GM12878 (cell line): ENCODE measurements at regions of chr2 and their contacts with region 1.

Region 1: DNA sequence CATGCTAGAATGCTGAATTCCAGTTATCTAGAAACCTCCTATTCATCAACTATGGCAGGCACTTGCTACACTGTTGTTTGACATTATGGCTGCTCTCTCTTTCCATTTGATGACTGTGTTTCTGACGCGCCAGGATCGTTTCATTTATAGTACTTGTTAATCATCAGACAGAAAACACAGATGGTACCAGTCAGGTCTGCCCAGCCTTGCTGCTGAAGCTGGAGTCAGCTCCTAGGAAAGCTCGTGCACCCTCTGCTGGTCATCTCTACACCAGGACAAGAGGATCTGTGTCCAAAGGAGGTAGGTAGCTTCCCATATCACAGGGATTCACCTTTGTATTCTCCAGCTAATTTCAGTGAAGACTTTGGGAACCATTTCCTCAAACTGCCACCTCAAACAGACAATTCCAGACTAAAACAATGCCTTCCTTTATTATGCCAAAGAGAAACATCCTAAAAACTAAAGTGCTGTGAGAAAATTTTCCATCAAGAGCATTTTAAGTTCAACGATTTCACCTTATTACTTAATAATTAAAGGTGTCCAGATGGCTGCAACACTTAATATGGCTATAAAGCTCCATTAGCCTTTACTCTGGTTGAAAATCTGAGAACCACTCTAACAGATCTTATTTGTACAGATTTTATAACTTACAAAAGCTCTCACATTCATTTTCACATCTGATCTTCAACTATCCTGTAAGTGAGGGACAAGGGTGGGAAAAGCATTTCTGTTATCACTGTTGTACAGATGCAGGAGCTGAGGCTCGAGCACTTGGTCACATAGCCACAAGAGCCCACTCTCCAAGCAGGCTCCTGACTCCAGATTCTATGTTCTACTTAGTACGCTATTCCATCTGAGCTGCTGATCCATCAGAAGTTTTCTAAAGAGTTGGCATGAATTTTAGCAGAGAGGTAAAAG is 17.5 kb downstream of the METTL8 start:
- DNase-seq: peak; percentile 95
- ATAC-seq: peak; percentile 91
- H3K4me3 ChIP-seq: no peak overlapping the region; the same call in 1 of the 2 replicates
- H3K27ac ChIP-seq: peak overlapping the region; percentile 83
- H3K4me1 ChIP-seq: peaks cover 32% of the 10 kb centered on the region
- H3K27me3 ChIP-seq: no peaks in the 10 kb centered on the region
- CTCF ChIP-seq: peak; percentile 83 to 95 (median 88); a peak in 5 of 6 replicates
- EP300 ChIP-seq: peak in 1 of 2 experiments; percentile 50; a peak in 2 of 4 replicates
- POLR2A ChIP-seq: peak; percentile 64
- RAD21 ChIP-seq: peak; percentile 97

Region 2: GRCh38 chr2:171086352-171087290 is 329.6 kb before region 1 on chr2:
- CTCF ChIA-PET with region 1: interaction called, 28 read pairs
- POLR2A ChIA-PET with region 1: no interaction called
- RAD21 ChIA-PET with region 1: interaction called, 7 read pairs
- SMC1A ChIA-PET with region 1: interaction called, 12 read pairs
- in situ Hi-C with region 1: no loop called
- intact Hi-C with region 1: no loop called
- DNase-seq: peak; percentile 9
- ATAC-seq: peak; percentile 91
- H3K4me3 ChIP-seq: no peak overlapping the region
- H3K27ac ChIP-seq: peak overlapping the region; percentile 17; the same call in 1 of the 2 replicates
- H3K4me1 ChIP-seq: no peaks in the 10 kb centered on the region; the same call in 1 of the 2 replicates
- H3K27me3 ChIP-seq: no peaks in the 10 kb centered on the region
- CTCF ChIP-seq: peak; percentile 45 to 64 (median 63)
- EP300 ChIP-seq: no peak
- POLR2A ChIP-seq: no peak
- RAD21 ChIP-seq: 0 out of 2 replicates have a peak, but pooled peaks have one; percentile 8

Region 3: GRCh38 chr2:171244970-171245782 is 171.1 kb before region 1 on chr2:
- CTCF ChIA-PET with region 1: interaction called, 6 read pairs
- POLR2A ChIA-PET with region 1: no interaction called
- RAD21 ChIA-PET with region 1: interaction called, 11 read pairs
- SMC1A ChIA-PET with region 1: interaction called, 3 read pairs
- in situ Hi-C with region 1: no loop called
- intact Hi-C with region 1: loop called (anchors 5 kb)
- DNase-seq: no peak
- ATAC-seq: no peak
- H3K4me3 ChIP-seq: no peak overlapping the region
- H3K27ac ChIP-seq: no peak overlapping the region
- H3K4me1 ChIP-seq: peaks cover 24% of the 10 kb centered on the region
- H3K27me3 ChIP-seq: no peaks in the 10 kb centered on the region
- CTCF ChIP-seq: no peak
- EP300 ChIP-seq: no peak
- POLR2A ChIP-seq: no peak
- RAD21 ChIP-seq: no peak; the same call in 1 of the 2 replicates

Region 4: DNA sequence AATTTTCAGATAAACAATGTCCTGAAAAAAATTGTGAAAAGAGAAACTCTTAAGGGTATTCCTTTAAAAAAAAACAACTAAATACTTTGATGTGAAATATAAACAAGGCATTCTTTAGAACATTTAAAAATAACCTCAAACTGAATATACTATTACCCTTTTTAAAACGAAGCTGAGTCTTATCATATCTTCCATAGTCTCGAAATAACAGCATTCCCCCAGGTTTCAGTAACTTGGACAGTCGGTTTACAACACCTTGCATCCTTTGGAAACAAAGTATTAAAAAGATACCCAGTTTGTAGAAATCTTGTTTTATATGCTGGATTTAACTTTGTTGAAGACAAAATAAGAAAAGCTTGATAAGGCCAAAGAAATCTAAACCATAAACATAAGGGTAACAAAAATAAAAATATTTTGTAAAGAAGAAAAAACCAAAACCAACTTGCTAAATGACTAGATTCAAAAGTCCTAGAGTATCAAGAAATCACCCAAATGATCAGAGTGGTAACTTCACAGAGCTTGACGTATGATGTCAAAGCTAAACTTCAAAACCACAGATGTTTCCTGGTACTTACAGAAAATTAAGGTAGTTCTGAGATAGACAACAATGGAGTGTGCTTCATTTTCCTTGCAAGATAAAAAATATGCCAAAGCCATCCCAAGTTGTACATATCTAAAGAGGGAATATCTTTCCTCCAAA is 90.2 kb before region 1 on chr2:
- CTCF ChIA-PET with region 1: interaction called, 110 read pairs
- POLR2A ChIA-PET with region 1: interaction called, 168 read pairs
- RAD21 ChIA-PET with region 1: interaction called, 208 read pairs
- SMC1A ChIA-PET with region 1: interaction called, 273 read pairs
- in situ Hi-C with region 1: loop called (anchors 5 kb)
- intact Hi-C with region 1: no loop called
- DNase-seq: no peak
- ATAC-seq: peak; percentile 71
- H3K4me3 ChIP-seq: peak overlapping the region; percentile 41; the same call in 1 of the 2 replicates
- H3K27ac ChIP-seq: peak overlapping the region; percentile 100
- H3K4me1 ChIP-seq: peaks cover 57% of the 10 kb centered on the region
- H3K27me3 ChIP-seq: no peaks in the 10 kb centered on the region
- CTCF ChIP-seq: no peak
- EP300 ChIP-seq: peak; percentile 61 to 62; a peak in 2 of 4 replicates
- POLR2A ChIP-seq: no peak
- RAD21 ChIP-seq: no peak

Region 5: DNA sequence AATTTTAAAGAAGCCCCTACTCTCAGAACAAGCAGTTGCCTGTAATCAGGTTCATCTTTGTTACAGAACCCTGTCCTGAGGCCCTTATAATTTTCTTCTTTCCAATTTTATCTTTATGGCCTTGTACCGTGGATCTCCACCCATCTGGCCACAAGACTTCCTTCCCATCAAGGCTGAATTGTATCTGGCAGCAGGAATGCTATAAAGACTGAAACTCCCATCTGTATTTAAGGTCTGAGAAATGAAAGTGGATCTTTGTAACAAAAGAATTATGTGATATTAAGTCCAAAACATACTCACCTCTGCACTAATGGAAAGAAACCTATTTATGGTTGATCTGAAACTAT is 74.2 kb before region 1 on chr2:
- CTCF ChIA-PET with region 1: interaction called, 34 read pairs
- POLR2A ChIA-PET with region 1: interaction called, 8 read pairs
- RAD21 ChIA-PET with region 1: interaction called, 54 read pairs
- SMC1A ChIA-PET with region 1: interaction called, 59 read pairs
- in situ Hi-C with region 1: no loop called
- intact Hi-C with region 1: loop called (anchors 5 kb)
- DNase-seq: no peak
- ATAC-seq: peak; percentile 10; the same call in 2 of the 3 replicates
- H3K4me3 ChIP-seq: no peak overlapping the region
- H3K27ac ChIP-seq: peak overlapping the region; percentile 69
- H3K4me1 ChIP-seq: peaks cover 23% of the 10 kb centered on the region
- H3K27me3 ChIP-seq: no peaks in the 10 kb centered on the region
- CTCF ChIP-seq: no peak
- EP300 ChIP-seq: no peak
- POLR2A ChIP-seq: no peak
- RAD21 ChIP-seq: no peak

Region 6: GRCh38 chr2:171390941-171391516 is 25.2 kb before region 1 on chr2:
- CTCF ChIA-PET with region 1: interaction called, 11 read pairs
- POLR2A ChIA-PET with region 1: interaction called, 10 read pairs
- RAD21 ChIA-PET with region 1: interaction called, 15 read pairs
- SMC1A ChIA-PET with region 1: interaction called, 69 read pairs
- in situ Hi-C with region 1: no loop called
- intact Hi-C with region 1: no loop called
- DNase-seq: no peak
- ATAC-seq: peak; percentile 83
- H3K4me3 ChIP-seq: no peak overlapping the region
- H3K27ac ChIP-seq: peak overlapping the region; percentile 64
- H3K4me1 ChIP-seq: peaks cover 48% of the 10 kb centered on the region
- H3K27me3 ChIP-seq: no peaks in the 10 kb centered on the region
- CTCF ChIP-seq: no peak
- EP300 ChIP-seq: peak; percentile 58 to 64; a peak in 2 of 4 replicates
- POLR2A ChIP-seq: no peak
- RAD21 ChIP-seq: no peak